CD4-positive, alpha-beta memory T cell (primary cell): ENCODE measurements at regions of chr12 and their contacts with region 1.

Region 1: GRCh38 chr12:75505706-75506312 is 5.6 kb downstream of the KRR1 start:
- DNase-seq: peak in 4 of 5 donors; percentile 28 to 37 (median 36)
- H3K4me3 ChIP-seq: no peak overlapping the region
- H3K4me3 Mint-ChIP-seq: no peak overlapping the region
- H3K27ac ChIP-seq: no peak overlapping the region
- H3K27ac Mint-ChIP-seq: peak overlapping the region; percentile 12 to 64 (median 52)
- H3K4me1 ChIP-seq: peaks cover 19% of the 10 kb centered on the region
- H3K4me1 Mint-ChIP-seq: peaks cover 22 to 30% (median 25%) of the 10 kb centered on the region in 4 donors
- H3K27me3 ChIP-seq: no peaks in the 10 kb centered on the region
- H3K27me3 Mint-ChIP-seq: no peaks in the 10 kb centered on the region

Region 2: GRCh38 chr12:74689071-74689655 is 816.6 kb before region 1 on chr12:
- CTCF ChIA-PET with region 1: no interaction called
- POLR2A ChIA-PET with region 1: no interaction called
- intact Hi-C with region 1: loop called (anchors 1 kb)
- DNase-seq: peak in 4 of 5 donors; percentile 23 to 44 (median 39)
- H3K4me3 ChIP-seq: no peak overlapping the region
- H3K4me3 Mint-ChIP-seq: no peak overlapping the region
- H3K27ac ChIP-seq: no peak overlapping the region
- H3K27ac Mint-ChIP-seq: no peak overlapping the region
- H3K4me1 ChIP-seq: no peaks in the 10 kb centered on the region
- H3K4me1 Mint-ChIP-seq: no peaks in the 10 kb centered on the region
- H3K27me3 ChIP-seq: no peaks in the 10 kb centered on the region
- H3K27me3 Mint-ChIP-seq: peaks cover 0 to 2% of the 10 kb centered on the region in 2 donors

Region 3: DNA sequence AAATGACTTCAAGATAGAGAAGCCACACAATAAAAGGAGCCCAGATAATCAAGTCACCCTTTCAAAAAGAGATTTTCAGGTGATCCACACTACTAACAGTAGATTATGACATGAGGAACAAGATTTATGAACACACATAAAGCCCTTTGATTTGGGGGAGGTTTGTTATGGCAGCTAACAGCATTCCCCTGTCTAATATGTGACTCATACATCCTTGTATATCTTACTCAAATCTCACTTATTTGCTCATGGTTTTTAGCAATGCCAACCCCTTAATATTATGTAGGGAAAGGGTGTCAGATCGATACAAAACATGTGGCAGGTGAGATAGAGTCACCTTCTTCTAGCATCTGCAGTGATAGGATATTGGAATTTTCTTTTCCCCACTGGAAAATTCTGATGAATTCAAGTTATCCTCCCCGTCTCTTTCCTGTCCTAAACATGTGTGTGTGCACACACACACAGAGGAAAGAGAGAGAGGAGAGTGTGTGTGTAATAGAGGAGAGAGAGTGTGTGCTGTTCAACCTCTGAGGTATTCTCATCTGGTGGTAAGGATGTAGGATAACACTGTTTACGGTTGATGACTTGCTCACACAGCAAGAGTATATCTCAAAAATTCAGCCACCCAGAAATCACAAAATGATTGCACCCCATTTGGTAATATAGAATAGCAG is 616.1 kb before region 1 on chr12:
- CTCF ChIA-PET with region 1: no interaction called
- POLR2A ChIA-PET with region 1: no interaction called
- intact Hi-C with region 1: no loop called
- DNase-seq: peak in 1 of 5 donors; percentile 2
- H3K4me3 ChIP-seq: no peak overlapping the region
- H3K4me3 Mint-ChIP-seq: peak overlapping the region in 5 of 8 donors; percentile 6 to 45 (median 35)
- H3K27ac ChIP-seq: no peak overlapping the region
- H3K27ac Mint-ChIP-seq: peak overlapping the region in 4 of 7 donors; percentile 0 to 63 (median 62)
- H3K4me1 ChIP-seq: peaks cover 44% of the 10 kb centered on the region
- H3K4me1 Mint-ChIP-seq: peaks cover 17 to 48% (median 29%) of the 10 kb centered on the region in 4 donors
- H3K27me3 ChIP-seq: no peaks in the 10 kb centered on the region
- H3K27me3 Mint-ChIP-seq: no peaks in the 10 kb centered on the region

Region 4: GRCh38 chr12:75334384-75335030 is 171.3 kb before region 1 on chr12 and contains the start of gene GLIPR1L1:
- CTCF ChIA-PET with region 1: interaction called, 43 read pairs
- POLR2A ChIA-PET with region 1: interaction called, 12 read pairs
- intact Hi-C with region 1: loop called (anchors 1 kb)
- DNase-seq: peak; percentile 76 to 82 (median 77)
- H3K4me3 ChIP-seq: peak within 1 kb of the TSS in 1 of 2 donors; percentile 54
- H3K4me3 Mint-ChIP-seq: peak within 1 kb of the TSS; percentile 70 to 86 (median 80)
- H3K27ac ChIP-seq: no peak within 1 kb of the TSS
- H3K27ac Mint-ChIP-seq: peak within 1 kb of the TSS in 1 of 7 donors; percentile 54
- H3K4me1 ChIP-seq: peaks cover 21% of the 10 kb centered on the region
- H3K4me1 Mint-ChIP-seq: peaks cover 13 to 21% (median 17%) of the 10 kb centered on the region in 4 donors
- H3K27me3 ChIP-seq: peaks cover 6% of the 10 kb centered on the region
- H3K27me3 Mint-ChIP-seq: peaks cover 6 to 12% of the 10 kb centered on the region in 2 donors
- total RNA-seq, gene GLIPR1L1: not detected

Region 5: GRCh38 chr12:75489613-75490210 is 16.1 kb before region 1 on chr12:
- CTCF ChIA-PET with region 1: interaction called, 68 read pairs
- POLR2A ChIA-PET with region 1: interaction called, 21 read pairs
- intact Hi-C with region 1: loop called (anchors 2 kb)
- DNase-seq: peak in 1 of 5 donors; percentile 41
- H3K4me3 ChIP-seq: no peak overlapping the region
- H3K4me3 Mint-ChIP-seq: peak overlapping the region in 7 of 8 donors; percentile 2 to 72 (median 28)
- H3K27ac ChIP-seq: peak overlapping the region; percentile 3
- H3K27ac Mint-ChIP-seq: peak overlapping the region; percentile 57 to 92 (median 83)
- H3K4me1 ChIP-seq: peaks cover 55% of the 10 kb centered on the region
- H3K4me1 Mint-ChIP-seq: peaks cover 47 to 81% (median 59%) of the 10 kb centered on the region in 4 donors
- H3K27me3 ChIP-seq: no peaks in the 10 kb centered on the region
- H3K27me3 Mint-ChIP-seq: no peaks in the 10 kb centered on the region

Region 6: GRCh38 chr12:75792687-75793086 is 286.9 kb after region 1 on chr12:
- CTCF ChIA-PET with region 1: no interaction called
- POLR2A ChIA-PET with region 1: no interaction called
- intact Hi-C with region 1: no loop called
- DNase-seq: no peak
- H3K4me3 ChIP-seq: no peak overlapping the region
- H3K4me3 Mint-ChIP-seq: no peak overlapping the region
- H3K27ac ChIP-seq: no peak overlapping the region
- H3K27ac Mint-ChIP-seq: no peak overlapping the region
- H3K4me1 ChIP-seq: no peaks in the 10 kb centered on the region
- H3K4me1 Mint-ChIP-seq: no peaks in the 10 kb centered on the region
- H3K27me3 ChIP-seq: no peaks in the 10 kb centered on the region
- H3K27me3 Mint-ChIP-seq: peaks cover 0 to 2% of the 10 kb centered on the region in 2 donors